ENCODE measurements at regions of chr11 and their contacts with region 1.

Region 1: DNA sequence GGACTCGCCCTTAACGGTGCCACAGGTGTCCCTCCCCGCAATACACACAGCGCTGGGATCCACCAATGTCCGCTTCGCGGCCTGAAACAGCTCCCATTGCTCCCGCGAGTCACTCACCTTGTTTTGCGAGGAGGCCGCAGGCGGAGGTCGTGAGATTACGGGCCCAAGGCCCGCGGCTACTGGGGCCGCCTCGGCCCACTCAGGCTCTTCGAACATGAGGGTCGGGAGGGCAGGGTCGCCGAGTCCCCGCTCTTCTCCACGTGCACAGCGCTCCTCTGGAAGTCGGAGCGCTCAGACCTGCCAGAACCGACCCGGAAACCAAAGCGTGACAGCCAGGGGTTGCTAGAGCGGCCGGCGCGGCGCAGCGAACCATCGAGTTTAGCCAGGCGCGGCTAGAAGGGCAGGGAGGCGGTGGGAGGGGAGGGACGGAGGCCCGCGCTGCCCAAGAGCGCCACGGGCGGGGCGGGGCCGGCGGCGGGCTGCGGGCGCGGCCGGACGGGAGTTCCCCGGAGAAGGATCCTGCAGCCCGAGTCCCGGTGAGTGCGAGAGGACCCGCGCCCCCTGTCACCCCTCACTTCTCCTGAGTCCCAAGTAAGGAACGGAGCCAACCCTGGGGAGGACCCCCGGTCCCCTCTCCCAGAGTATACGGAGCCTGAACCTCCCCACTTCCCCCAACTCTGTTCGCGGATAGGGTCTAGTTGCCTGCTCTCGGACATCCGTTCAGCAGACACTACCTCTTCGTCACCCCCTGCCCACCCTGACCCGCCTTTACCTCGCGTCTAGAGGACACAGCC is at the starts of genes ILK and RRP8:
- DNase-seq: peak; percentile 92
- ATAC-seq: peak; percentile 82
- H3K4me3 Mint-ChIP-seq: no peak within 1 kb of the TSS
- H3K27ac Mint-ChIP-seq: no peak within 1 kb of the TSS
- H3K4me1 Mint-ChIP-seq: peaks cover 35% of the 10 kb centered on the region
- H3K27me3 Mint-ChIP-seq: no peaks in the 10 kb centered on the region
- total RNA-seq, gene ILK: 195 to 197 TPM
- total RNA-seq, gene RRP8: 28.6 to 29.8 TPM

Region 2: GRCh38 chr11:6481012-6481923 is 122.2 kb before region 1 on chr11 and contains the starts of genes ARFIP2 and TIMM10B:
- CTCF ChIA-PET with region 1: interaction called, 9 read pairs
- POLR2A ChIA-PET with region 1: interaction called, 10 read pairs
- DNase-seq: peak; percentile 99
- ATAC-seq: peak; percentile 96
- H3K4me3 Mint-ChIP-seq: peak within 1 kb of the TSS; percentile 94
- H3K27ac Mint-ChIP-seq: peak within 1 kb of the TSS; percentile 97
- H3K4me1 Mint-ChIP-seq: peaks cover 38% of the 10 kb centered on the region
- H3K27me3 Mint-ChIP-seq: no peaks in the 10 kb centered on the region
- total RNA-seq, gene ARFIP2: 38.6 to 39.8 TPM
- total RNA-seq, gene TIMM10B: 34.1 to 35.4 TPM

Region 3: DNA sequence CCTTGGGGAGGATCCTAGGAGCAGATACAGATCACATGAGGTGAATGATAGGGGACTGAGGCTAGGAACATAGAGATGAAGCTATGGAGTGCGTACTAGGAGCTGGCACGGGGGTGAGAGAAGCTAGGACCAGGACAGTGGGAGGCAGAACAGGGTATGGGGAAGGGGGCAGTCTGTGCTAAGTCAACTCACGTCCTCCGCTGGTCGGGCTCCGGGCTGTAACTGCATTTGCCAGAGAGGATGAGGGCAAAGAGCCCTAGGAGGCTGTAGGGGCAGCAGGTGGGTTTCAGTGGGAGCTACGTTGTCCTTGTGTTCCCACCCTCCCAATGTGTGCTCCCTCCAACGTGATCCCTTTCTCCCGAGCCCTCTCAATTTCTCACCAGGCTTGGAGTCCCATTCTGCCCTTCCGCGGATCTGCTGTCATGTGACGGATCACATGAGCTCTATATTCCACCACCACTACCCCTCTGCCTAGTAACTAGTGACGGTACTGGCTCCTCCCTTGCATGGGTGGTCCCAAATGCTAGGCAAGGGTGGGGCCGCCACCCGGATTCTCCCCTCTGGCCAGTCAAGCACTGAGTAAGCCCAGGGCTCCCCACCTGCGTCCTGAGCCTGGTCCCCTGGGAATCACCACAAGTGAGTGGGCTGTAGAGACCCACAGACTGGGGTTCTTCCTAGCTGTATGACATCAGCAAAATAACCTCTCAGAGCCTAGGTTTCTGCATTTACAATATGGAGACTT is 15.7 kb after region 1 on chr11 and contains the start of gene TPP1:
- CTCF ChIA-PET with region 1: interaction called, 47 read pairs
- POLR2A ChIA-PET with region 1: interaction called, 21 read pairs
- DNase-seq: peak; percentile 95
- ATAC-seq: peak; percentile 96
- H3K4me3 Mint-ChIP-seq: no peak within 1 kb of the TSS
- H3K27ac Mint-ChIP-seq: no peak within 1 kb of the TSS
- H3K4me1 Mint-ChIP-seq: peaks cover 2% of the 10 kb centered on the region
- H3K27me3 Mint-ChIP-seq: no peaks in the 10 kb centered on the region
- total RNA-seq, gene TPP1: 74.1 to 78.9 TPM

Region 4: GRCh38 chr11:6674862-6675261 is 71.4 kb after region 1 on chr11:
- CTCF ChIA-PET with region 1: interaction called, 67 read pairs
- POLR2A ChIA-PET with region 1: interaction called, 3 read pairs
- DNase-seq: no peak
- ATAC-seq: no peak
- H3K4me3 Mint-ChIP-seq: no peak overlapping the region
- H3K27ac Mint-ChIP-seq: no peak overlapping the region
- H3K4me1 Mint-ChIP-seq: peaks cover 48% of the 10 kb centered on the region
- H3K27me3 Mint-ChIP-seq: no peaks in the 10 kb centered on the region

Region 5: GRCh38 chr11:6693342-6694228 is 90.1 kb after region 1 on chr11:
- CTCF ChIA-PET with region 1: no interaction called
- POLR2A ChIA-PET with region 1: no interaction called
- DNase-seq: peak; percentile 66
- ATAC-seq: peak; percentile 70
- H3K4me3 Mint-ChIP-seq: peak overlapping the region; percentile 1
- H3K27ac Mint-ChIP-seq: peak overlapping the region; percentile 31
- H3K4me1 Mint-ChIP-seq: peaks cover 23% of the 10 kb centered on the region
- H3K27me3 Mint-ChIP-seq: no peaks in the 10 kb centered on the region

Measured in activated CD8-positive, alpha-beta T cell treated with anti-CD3 and anti-CD28 coated beads, Interleukin-2, amount 10 ng/mL, durations not matched to agents 7 days and 5 days (primary cell).